CD4-positive, alpha-beta memory T cell (primary cell): ENCODE measurements at regions of chr16 and their contacts with region 1.

Region 1: GRCh38 chr16:66357153-66357928 is 9.2 kb upstream of the CDH5 start:
- DNase-seq: peak in 3 of 5 donors; percentile 11 to 19 (median 16)
- H3K4me3 ChIP-seq: no peak overlapping the region
- H3K4me3 Mint-ChIP-seq: no peak overlapping the region
- H3K27ac ChIP-seq: no peak overlapping the region
- H3K27ac Mint-ChIP-seq: peak overlapping the region in 1 of 7 donors; percentile 24
- H3K4me1 ChIP-seq: peaks cover 5% of the 10 kb centered on the region
- H3K4me1 Mint-ChIP-seq: peaks cover 0 to 5% (median 2%) of the 10 kb centered on the region in 4 donors
- H3K27me3 ChIP-seq: no peaks in the 10 kb centered on the region
- H3K27me3 Mint-ChIP-seq: peaks cover 34 to 38% of the 10 kb centered on the region in 2 donors

Region 2: DNA sequence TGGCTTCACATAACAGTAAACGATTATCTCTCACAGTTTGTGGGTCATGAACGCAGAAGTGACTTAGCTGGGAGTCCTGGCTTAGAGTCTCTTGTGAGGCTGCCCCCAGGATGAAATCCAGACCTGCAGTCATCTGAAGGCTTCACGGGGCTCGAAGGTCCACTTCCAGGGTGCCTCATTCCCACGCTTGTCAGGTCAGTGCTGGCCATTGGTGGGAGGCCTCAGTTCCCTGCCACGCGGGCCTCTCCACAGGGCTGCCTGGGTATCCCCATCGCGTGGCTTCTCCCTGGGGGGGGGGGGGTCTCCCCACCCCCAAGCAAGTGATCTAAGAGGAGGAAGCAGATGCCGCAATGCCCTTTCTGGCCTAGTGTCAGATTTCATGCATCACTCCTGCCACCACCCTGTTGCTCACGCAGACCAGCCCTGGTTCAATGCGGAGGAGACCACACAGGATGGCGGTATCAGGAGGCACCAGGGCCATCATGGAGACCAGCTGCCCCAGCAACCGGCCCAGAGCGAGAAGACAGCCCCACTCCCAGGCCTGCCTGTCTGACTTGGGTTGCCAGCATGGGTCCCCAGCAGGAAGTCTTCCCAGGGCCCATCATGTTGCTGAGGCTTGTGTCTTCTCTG is 68.2 kb before region 1 on chr16:
- CTCF ChIA-PET with region 1: no interaction called
- POLR2A ChIA-PET with region 1: no interaction called
- intact Hi-C with region 1: no loop called
- DNase-seq: no peak
- H3K4me3 ChIP-seq: no peak overlapping the region
- H3K4me3 Mint-ChIP-seq: no peak overlapping the region
- H3K27ac ChIP-seq: no peak overlapping the region
- H3K27ac Mint-ChIP-seq: no peak overlapping the region
- H3K4me1 ChIP-seq: no peaks in the 10 kb centered on the region
- H3K4me1 Mint-ChIP-seq: no peaks in the 10 kb centered on the region
- H3K27me3 ChIP-seq: no peaks in the 10 kb centered on the region
- H3K27me3 Mint-ChIP-seq: peaks cover 10 to 11% of the 10 kb centered on the region in 2 donors

Region 3: DNA sequence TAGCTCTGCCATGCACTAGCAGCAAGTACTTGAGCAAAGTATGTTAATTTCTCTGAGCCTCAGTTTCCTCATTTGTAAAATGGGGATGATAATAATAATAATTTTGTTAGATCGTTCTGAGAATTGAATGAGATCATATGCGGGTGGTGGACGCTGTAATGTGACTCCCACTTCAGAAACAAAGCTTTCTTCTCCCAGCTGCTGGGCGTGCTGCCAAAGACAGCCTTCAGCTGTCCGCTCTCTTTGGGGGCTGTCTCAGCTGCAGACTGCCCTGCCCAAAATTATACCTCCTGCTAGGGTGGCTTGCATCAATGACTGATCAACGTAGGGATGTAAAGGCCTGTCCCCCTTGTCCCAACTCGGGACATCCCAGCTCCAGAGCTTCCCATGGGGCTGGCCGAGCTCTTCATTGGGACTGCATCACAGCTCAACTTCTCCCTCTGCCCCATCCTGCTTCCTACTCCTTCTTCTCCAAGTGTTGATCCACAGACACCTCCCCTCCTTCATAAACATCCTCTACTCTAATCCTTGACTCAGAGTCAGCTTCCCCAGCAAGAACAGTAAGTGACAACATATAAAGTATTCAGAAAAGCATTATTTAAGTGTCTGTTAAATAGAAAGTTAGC is 21.5 kb before region 1 on chr16:
- CTCF ChIA-PET with region 1: interaction called, 23 read pairs
- POLR2A ChIA-PET with region 1: no interaction called
- intact Hi-C with region 1: no loop called
- DNase-seq: no peak
- H3K4me3 ChIP-seq: no peak overlapping the region
- H3K4me3 Mint-ChIP-seq: no peak overlapping the region
- H3K27ac ChIP-seq: no peak overlapping the region
- H3K27ac Mint-ChIP-seq: no peak overlapping the region
- H3K4me1 ChIP-seq: no peaks in the 10 kb centered on the region
- H3K4me1 Mint-ChIP-seq: no peaks in the 10 kb centered on the region
- H3K27me3 ChIP-seq: peaks cover 6% of the 10 kb centered on the region
- H3K27me3 Mint-ChIP-seq: peaks cover 11 to 32% of the 10 kb centered on the region in 2 donors

Region 4: GRCh38 chr16:66344533-66345145 is 12.7 kb before region 1 on chr16:
- CTCF ChIA-PET with region 1: interaction called, 27 read pairs
- POLR2A ChIA-PET with region 1: no interaction called
- intact Hi-C with region 1: no loop called
- DNase-seq: peak in 4 of 5 donors; percentile 13 to 24 (median 19)
- H3K4me3 ChIP-seq: no peak overlapping the region
- H3K4me3 Mint-ChIP-seq: no peak overlapping the region
- H3K27ac ChIP-seq: no peak overlapping the region
- H3K27ac Mint-ChIP-seq: no peak overlapping the region
- H3K4me1 ChIP-seq: no peaks in the 10 kb centered on the region
- H3K4me1 Mint-ChIP-seq: no peaks in the 10 kb centered on the region
- H3K27me3 ChIP-seq: no peaks in the 10 kb centered on the region
- H3K27me3 Mint-ChIP-seq: peaks cover 25 to 41% of the 10 kb centered on the region in 2 donors

Region 5: DNA sequence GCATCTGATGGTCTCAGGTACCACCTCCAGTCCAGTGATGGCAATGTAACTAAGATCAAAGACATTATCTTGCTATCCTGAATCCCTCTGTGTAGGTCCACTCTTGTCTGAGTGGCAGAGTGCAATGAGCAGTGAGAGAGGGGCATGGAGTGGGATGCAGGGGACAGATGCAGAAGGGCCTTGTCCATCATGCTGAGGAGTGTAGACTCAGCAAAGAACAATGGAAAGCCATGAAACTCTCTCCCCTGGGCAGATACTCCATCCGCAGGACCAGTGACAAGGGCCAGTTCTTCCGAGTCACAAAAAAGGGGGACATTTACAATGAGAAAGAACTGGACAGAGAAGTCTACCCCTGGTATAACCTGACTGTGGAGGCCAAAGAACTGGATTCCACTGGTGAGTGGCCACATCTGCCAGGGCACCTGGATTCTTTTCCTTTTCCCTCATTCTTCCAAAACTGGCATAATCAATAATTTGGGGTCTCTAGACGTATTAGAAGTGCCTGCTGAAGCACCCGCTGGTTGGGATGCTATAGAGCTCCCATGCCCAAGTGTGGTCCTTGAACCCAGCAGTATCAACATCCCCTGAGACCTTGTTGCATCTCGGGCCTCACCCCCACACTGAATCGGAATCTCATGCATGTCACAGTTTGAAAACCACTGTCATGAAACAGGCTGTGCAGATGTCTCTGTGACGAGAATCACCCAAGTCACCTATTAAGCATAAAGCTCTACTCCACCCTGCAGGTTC is 38.6 kb after region 1 on chr16:
- CTCF ChIA-PET with region 1: no interaction called
- POLR2A ChIA-PET with region 1: no interaction called
- intact Hi-C with region 1: no loop called
- DNase-seq: no peak
- H3K4me3 ChIP-seq: no peak overlapping the region
- H3K4me3 Mint-ChIP-seq: no peak overlapping the region
- H3K27ac ChIP-seq: no peak overlapping the region
- H3K27ac Mint-ChIP-seq: no peak overlapping the region
- H3K4me1 ChIP-seq: no peaks in the 10 kb centered on the region
- H3K4me1 Mint-ChIP-seq: no peaks in the 10 kb centered on the region
- H3K27me3 ChIP-seq: no peaks in the 10 kb centered on the region
- H3K27me3 Mint-ChIP-seq: peaks cover 0 to 4% of the 10 kb centered on the region in 2 donors

Region 6: DNA sequence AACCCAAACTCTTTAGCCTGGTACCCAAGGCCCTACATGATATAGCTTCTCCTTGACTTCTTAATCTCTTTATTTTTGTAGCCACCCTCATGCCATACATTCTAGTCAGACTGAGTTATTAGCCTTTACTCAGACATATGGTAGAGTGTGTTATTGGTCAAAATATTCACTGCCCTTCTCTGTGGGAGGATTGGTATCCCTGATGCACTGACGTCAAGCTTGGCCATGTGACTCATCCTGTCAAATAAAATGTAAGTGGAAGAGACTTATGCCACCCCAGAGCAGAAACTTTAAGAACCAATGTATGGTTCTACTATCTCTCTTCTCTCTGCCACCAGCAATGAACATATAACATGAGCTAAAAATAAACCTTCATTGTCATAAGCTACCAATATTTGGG is 57.5 kb after region 1 on chr16:
- CTCF ChIA-PET with region 1: no interaction called
- POLR2A ChIA-PET with region 1: no interaction called
- intact Hi-C with region 1: no loop called
- DNase-seq: no peak
- H3K4me3 ChIP-seq: no peak overlapping the region
- H3K4me3 Mint-ChIP-seq: no peak overlapping the region
- H3K27ac ChIP-seq: no peak overlapping the region
- H3K27ac Mint-ChIP-seq: no peak overlapping the region
- H3K4me1 ChIP-seq: peaks cover 14% of the 10 kb centered on the region
- H3K4me1 Mint-ChIP-seq: peaks cover 6 to 26% (median 16%) of the 10 kb centered on the region in 4 donors
- H3K27me3 ChIP-seq: no peaks in the 10 kb centered on the region
- H3K27me3 Mint-ChIP-seq: peaks cover 0 to 1% of the 10 kb centered on the region in 2 donors

Region 7: GRCh38 chr16:66426112-66427035 is 69.0 kb after region 1 on chr16:
- CTCF ChIA-PET with region 1: no interaction called
- POLR2A ChIA-PET with region 1: no interaction called
- intact Hi-C with region 1: no loop called
- DNase-seq: no peak
- H3K4me3 ChIP-seq: no peak overlapping the region
- H3K4me3 Mint-ChIP-seq: peak overlapping the region in 7 of 8 donors; percentile 33 to 78 (median 58)
- H3K27ac ChIP-seq: no peak overlapping the region
- H3K27ac Mint-ChIP-seq: no peak overlapping the region
- H3K4me1 ChIP-seq: peaks cover 11% of the 10 kb centered on the region
- H3K4me1 Mint-ChIP-seq: peaks cover 2 to 10% (median 5%) of the 10 kb centered on the region in 4 donors
- H3K27me3 ChIP-seq: peaks cover 22% of the 10 kb centered on the region
- H3K27me3 Mint-ChIP-seq: peaks cover 33 to 42% of the 10 kb centered on the region in 2 donors

Region 8: DNA sequence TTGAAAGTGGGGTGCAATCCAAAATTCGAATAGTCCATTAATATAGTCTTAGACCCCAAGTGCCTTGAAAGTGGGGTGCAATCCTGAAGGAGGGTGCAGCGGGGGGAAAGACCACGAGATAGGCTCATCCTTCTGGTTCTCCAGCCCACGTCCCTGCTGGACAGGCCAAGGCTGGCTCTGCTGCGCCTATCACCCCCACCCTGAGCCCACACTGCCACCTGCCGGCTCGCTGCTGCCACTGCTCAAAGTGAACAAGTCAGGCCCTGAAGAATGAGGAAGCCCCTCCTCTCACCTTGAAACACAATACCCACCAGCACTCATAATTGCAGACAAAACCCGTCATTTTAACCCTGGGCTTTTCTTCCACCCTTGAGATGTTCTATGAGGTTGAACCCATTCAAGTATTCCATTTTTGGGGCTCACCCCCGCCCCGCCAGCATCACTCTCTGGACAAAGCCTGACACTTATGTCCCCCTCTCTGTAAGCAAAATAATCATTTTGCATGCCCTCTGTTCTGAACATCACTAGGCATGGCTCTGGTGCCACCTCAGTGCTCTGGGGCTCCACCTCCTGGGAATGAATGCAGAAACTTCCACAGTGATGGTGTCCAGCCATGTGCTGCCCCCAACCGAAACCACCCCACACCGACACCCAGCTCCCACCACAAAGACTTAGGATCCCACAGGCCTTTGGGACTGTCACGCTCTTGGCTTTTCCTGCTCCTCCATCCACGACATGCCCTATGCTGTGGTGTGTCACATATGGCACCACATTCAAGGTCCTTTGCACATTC is 126.5 kb after region 1 on chr16:
- CTCF ChIA-PET with region 1: no interaction called
- POLR2A ChIA-PET with region 1: no interaction called
- intact Hi-C with region 1: loop called (anchors 1 kb)
- DNase-seq: peak; percentile 60 to 69 (median 64)
- H3K4me3 ChIP-seq: no peak overlapping the region
- H3K4me3 Mint-ChIP-seq: no peak overlapping the region
- H3K27ac ChIP-seq: no peak overlapping the region
- H3K27ac Mint-ChIP-seq: peak overlapping the region in 5 of 7 donors; percentile 27 to 68 (median 61)
- H3K4me1 ChIP-seq: peaks cover 16% of the 10 kb centered on the region
- H3K4me1 Mint-ChIP-seq: peaks cover 10 to 24% (median 13%) of the 10 kb centered on the region in 4 donors
- H3K27me3 ChIP-seq: no peaks in the 10 kb centered on the region
- H3K27me3 Mint-ChIP-seq: no peaks in the 10 kb centered on the region